ENCODE measurements at regions of chr9 and their contacts with region 1.

Region 1: GRCh38 chr9:79129865-79130480 is 441.8 kb upstream of the TLE4 start:
- DNase-seq: peak in 1 of 2 experiments; percentile 51
- H3K4me3 ChIP-seq: no peak overlapping the region
- H3K27ac ChIP-seq: no peak overlapping the region
- H3K4me1 ChIP-seq: no peaks in the 10 kb centered on the region
- H3K27me3 ChIP-seq: no peaks in the 10 kb centered on the region; the same call in none of the 2 replicates
- CTCF ChIP-seq: peak; percentile 76

Region 2: DNA sequence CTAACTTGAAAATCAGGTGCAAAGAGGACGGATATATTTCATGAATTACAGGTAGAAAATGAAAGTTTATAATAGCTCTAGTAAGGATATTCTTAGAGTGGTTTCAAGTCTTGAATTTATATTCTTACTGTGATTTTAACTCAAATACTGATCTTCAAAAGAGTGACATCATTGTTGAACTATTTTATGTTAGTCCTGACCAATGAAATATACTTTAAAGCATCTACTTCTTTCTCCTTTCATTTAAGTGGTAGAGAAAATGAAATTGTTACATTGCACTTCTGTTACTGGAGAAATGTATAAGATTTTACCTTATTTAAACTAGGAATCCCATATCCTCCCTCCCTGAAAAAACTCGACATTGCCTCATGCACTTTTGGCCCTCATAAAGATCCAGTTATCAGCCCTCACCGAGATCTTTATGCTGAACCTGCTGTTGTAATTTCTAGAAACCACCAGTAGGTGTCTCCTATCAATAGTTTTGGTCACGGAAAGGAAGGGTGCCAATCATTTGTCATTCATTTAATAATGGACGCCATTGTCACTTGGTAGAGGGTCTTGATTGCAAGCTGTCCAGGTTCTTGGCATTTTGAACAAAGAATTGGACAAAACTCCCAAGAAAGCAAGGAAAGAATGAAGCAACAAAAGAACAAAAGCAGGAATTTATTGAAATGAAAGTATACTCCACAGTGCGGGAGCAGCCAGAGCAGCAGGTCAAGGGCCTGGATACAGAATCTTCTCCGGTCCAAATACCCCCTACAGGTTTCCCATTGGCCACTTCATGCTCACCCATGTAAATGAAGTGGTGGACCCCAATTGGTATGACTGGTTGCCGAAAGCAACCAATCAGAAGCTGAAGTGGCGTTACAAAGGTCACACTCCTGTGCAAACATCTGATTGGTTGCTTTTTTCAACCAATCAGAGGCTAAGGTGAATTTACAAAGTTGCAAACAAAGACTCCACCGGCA is 308.8 kb before region 1 on chr9:
- CTCF ChIA-PET with region 1: no interaction called
- POLR2A ChIA-PET with region 1: no interaction called
- intact Hi-C with region 1: loop called (anchors 5 kb)
- DNase-seq: no peak
- H3K4me3 ChIP-seq: no peak overlapping the region
- H3K27ac ChIP-seq: no peak overlapping the region
- H3K4me1 ChIP-seq: no peaks in the 10 kb centered on the region
- H3K27me3 ChIP-seq: no peaks in the 10 kb centered on the region
- CTCF ChIP-seq: peak; percentile 87

Measured in PC-9 (cell line).